Activated CD8-positive, alpha-beta memory T cell treated with anti-CD3 and anti-CD28 coated beads, Interleukin-2, amount 10 ng/mL, durations not matched to agents 7 days and 5 days (primary cell): ENCODE measurements at regions of chr1 and their contacts with region 1.

Region 1: GRCh38 chr1:212665241-212666115 is 34.2 kb downstream of the BATF3 start:
- DNase-seq: peak; percentile 87
- ATAC-seq: peak; percentile 98
- H3K4me3 Mint-ChIP-seq: peak overlapping the region; percentile 71
- H3K27ac Mint-ChIP-seq: peak overlapping the region; percentile 78
- H3K4me1 Mint-ChIP-seq: peaks cover 43% of the 10 kb centered on the region
- H3K27me3 Mint-ChIP-seq: peaks cover 15% of the 10 kb centered on the region

Region 2: DNA sequence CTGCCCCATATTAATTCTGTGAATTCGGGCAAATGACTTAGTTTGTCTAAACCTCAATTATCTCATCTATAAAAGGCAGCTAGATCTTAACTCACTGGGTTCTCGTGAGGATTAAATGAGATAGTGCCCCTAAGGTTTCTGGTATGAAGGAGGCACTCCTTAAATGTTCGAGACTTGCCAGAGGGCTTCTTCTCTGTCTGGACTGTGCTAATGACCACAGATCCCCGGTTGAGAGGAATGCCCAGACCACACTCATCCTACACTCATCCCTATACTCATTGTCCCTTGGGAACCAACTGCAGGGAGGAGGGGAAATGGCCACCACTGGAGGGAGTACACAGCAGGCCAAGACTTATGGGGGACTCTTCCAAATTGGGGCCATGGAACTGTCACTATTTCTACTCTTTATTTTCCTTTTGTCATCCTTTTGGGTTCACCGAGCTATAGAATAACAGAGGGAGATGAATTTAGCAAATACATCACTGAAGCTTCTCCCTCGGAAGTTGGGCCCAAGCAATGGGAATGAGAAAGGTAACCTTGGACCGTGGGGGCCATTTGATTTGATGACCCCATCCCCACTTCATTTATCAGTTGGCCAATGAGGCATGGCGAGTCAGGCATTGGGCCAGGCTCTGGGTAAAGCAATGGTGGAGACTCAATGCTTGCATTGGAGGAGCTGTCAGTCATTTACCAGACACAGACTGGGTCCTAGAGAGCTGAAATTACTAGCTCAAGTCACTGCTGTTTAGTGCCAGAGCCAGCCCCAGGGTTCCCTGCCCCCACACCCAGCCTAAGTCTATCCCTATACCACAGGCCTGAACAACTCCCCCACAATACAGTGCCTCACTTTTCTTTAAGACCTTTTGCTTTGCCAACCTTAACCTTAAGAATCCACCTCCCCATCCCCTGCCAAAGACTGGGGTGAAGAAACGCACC is 51.8 kb before region 1 on chr1:
- CTCF ChIA-PET with region 1: interaction called, 12 read pairs
- DNase-seq: no peak
- ATAC-seq: no peak
- H3K4me3 Mint-ChIP-seq: no peak overlapping the region
- H3K27ac Mint-ChIP-seq: no peak overlapping the region
- H3K4me1 Mint-ChIP-seq: peaks cover 51% of the 10 kb centered on the region
- H3K27me3 Mint-ChIP-seq: no peaks in the 10 kb centered on the region

Region 3: GRCh38 chr1:212651521-212651920 is 14.0 kb before region 1 on chr1:
- CTCF ChIA-PET with region 1: interaction called, 24 read pairs
- DNase-seq: no peak
- ATAC-seq: no peak
- H3K4me3 Mint-ChIP-seq: no peak overlapping the region
- H3K27ac Mint-ChIP-seq: no peak overlapping the region
- H3K4me1 Mint-ChIP-seq: peaks cover 2% of the 10 kb centered on the region
- H3K27me3 Mint-ChIP-seq: peaks cover 10% of the 10 kb centered on the region

Region 4: DNA sequence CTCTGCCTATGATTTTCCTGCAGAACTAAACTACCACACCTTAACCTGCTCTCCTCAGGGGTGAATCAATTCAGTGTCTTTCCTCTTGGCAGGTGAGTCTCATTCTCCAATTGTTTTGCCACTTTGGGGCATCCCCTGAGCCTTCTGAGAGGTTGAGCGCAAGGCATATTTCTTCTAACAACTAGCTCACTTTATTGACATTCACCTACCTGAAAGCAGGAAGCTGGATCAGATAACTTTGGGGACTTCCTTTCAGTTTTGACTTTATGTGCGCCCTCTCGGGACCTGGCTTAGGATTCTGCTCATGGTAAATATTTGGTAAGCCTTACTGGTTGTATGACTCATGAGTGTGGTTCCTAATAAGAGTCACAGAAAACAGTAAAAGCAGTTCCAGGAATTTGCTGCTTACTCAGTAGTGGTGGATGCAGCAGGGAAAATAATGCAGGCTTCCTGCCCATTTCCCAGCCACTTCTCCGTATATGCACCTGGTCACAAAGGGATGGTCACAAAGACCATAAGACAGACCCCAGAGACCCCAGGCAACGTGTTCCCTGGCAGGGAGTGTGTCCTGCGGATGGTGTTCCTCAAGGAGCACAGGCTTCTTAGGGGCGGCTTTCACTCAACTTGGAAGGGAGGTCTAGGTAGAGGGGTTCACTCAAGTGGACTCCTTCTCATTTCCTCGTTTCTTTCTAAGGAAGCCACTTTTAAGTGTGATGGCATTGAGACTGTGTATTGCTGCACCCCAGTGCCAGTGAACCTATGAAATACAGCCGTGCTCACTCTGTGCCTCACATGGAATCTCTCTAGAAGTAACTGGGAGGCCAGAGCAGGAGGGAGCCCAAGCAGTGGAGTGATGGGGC is 56.1 kb after region 1 on chr1:
- CTCF ChIA-PET with region 1: interaction called, 21 read pairs
- DNase-seq: peak; percentile 81
- ATAC-seq: peak; percentile 85
- H3K4me3 Mint-ChIP-seq: peak overlapping the region; percentile 42
- H3K27ac Mint-ChIP-seq: peak overlapping the region; percentile 84
- H3K4me1 Mint-ChIP-seq: peaks cover 70% of the 10 kb centered on the region
- H3K27me3 Mint-ChIP-seq: no peaks in the 10 kb centered on the region

Region 5: DNA sequence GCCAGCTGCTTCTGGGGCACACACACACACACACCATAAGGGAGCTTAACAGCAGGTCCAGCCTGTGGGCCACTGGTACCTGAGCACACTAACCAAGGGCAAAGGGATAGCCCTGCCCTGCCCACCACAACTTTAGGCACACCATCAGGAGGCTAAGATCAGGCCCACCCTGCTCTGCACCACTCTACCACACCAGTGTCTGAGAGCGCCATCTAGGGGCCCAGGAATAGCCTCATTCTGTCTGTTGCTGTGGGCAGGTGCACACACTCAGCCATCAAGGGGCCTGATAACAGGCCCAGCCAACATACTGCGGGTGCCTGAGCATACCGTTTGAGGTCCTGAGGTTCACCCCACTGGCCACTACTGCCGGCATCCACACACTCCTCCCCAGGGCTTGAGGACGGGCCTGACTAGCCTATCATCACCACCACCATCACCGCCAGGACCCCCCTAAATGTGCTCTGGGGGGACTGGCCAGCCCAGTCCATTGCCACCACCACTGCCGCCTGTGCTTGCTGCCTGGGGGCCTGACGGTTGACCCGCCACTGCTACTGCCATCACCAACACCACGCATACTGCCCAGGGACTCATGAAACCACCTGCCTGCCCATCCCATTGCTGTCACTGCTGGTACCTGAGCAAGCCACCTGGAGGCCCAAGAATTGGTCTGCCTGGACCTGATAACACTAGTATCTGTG is 94.8 kb after region 1 on chr1:
- CTCF ChIA-PET with region 1: interaction called, 32 read pairs
- DNase-seq: peak; percentile 80
- ATAC-seq: peak; percentile 94
- H3K4me3 Mint-ChIP-seq: no peak overlapping the region
- H3K27ac Mint-ChIP-seq: no peak overlapping the region
- H3K4me1 Mint-ChIP-seq: peaks cover 31% of the 10 kb centered on the region
- H3K27me3 Mint-ChIP-seq: no peaks in the 10 kb centered on the region

Region 6: DNA sequence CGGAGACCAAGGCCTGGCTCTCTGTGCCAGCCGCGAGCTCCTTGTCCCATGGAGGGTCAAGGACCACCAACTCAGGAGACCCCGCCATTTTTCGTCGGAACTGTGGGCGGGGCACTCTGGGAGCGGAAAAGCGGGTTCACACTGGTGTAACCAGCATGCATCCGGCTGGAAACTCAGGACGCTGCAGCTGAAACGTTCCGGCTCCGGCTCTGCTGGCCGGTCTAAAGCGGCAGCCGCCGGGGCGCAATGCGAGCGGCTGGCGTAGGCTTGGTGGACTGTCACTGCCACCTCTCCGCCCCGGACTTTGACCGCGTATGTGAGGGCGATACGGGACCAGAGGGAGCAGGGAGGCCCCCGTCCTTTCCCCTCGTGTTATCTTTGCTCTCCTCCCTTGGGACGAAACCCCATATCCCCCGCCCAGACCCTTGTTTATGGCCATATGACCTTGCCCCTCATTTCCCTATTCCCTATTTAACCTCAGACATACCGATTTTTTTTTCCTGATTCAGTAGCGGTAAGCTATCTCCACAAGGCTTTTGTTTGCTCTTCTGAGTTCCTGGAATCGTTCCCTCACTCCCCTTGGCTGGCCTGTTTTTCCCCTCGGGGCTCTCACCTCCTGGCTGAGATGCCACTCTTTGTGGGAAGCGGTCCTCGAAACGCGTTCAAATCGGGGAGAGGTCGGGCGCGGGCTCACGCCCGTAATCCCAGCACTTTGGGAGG is 126.4 kb after region 1 on chr1 and contains the starts of genes NSL1 and TATDN3:
- CTCF ChIA-PET with region 1: interaction called, 36 read pairs
- DNase-seq: peak; percentile 94
- ATAC-seq: peak; percentile 91
- H3K4me3 Mint-ChIP-seq: peak within 1 kb of the TSS; percentile 92
- H3K27ac Mint-ChIP-seq: peak within 1 kb of the TSS; percentile 95
- H3K4me1 Mint-ChIP-seq: peaks cover 41% of the 10 kb centered on the region
- H3K27me3 Mint-ChIP-seq: no peaks in the 10 kb centered on the region
- total RNA-seq, gene NSL1: 39.7 to 48.5 TPM
- total RNA-seq, gene TATDN3: 13.7 to 22.1 TPM

Region 7: DNA sequence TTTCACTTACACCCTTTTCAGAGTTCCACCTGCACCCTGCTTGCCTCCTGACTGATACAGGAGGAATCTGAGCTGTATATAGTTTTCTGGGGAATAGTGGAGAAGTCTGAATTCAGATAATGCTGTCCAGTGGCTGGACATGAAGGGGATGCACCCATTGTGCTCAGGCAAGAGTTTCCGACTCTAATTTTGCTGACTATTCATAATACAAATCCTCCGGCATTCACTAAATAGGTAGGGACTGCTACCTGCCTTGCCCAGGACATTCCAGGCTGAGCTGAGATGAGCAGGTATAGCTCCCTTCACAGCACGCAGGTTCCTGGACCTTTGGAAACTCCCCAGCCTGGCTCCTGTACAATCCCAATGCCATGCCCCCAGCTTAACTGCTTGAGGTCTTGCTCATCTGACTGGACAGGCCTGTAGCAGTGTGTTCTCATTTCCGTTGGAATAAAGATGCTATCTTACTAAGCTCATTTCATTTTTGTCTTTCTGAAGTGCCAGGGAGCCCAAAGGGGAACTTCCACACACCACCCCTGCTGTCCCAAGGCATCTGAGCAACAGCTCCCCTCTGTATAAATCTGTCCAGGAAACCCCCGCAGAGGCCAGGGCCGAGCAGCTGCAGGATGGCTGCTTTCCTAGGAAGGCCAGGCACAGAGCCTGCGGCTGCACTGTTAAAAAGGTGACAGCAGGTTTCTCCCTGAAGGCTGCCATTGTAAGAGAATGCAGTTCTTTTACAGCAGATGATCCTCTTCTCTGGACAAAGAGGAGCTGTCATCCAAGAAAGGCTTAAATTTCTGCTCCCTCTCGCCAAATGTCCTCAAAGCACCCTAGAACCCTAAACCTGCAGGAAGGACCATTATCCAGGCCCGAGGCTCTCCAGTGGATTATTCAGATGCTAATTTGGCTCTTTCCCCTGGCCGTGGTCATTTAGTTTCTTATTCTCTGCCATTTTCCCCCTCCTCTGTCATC is 263.1 kb after region 1 on chr1:
- CTCF ChIA-PET with region 1: no interaction called
- DNase-seq: no peak
- ATAC-seq: no peak
- H3K4me3 Mint-ChIP-seq: no peak overlapping the region
- H3K27ac Mint-ChIP-seq: no peak overlapping the region
- H3K4me1 Mint-ChIP-seq: peaks cover 13% of the 10 kb centered on the region
- H3K27me3 Mint-ChIP-seq: peaks cover 4% of the 10 kb centered on the region